ENCODE measurements at regions of chr2 and their contacts with region 1.

Region 1: DNA sequence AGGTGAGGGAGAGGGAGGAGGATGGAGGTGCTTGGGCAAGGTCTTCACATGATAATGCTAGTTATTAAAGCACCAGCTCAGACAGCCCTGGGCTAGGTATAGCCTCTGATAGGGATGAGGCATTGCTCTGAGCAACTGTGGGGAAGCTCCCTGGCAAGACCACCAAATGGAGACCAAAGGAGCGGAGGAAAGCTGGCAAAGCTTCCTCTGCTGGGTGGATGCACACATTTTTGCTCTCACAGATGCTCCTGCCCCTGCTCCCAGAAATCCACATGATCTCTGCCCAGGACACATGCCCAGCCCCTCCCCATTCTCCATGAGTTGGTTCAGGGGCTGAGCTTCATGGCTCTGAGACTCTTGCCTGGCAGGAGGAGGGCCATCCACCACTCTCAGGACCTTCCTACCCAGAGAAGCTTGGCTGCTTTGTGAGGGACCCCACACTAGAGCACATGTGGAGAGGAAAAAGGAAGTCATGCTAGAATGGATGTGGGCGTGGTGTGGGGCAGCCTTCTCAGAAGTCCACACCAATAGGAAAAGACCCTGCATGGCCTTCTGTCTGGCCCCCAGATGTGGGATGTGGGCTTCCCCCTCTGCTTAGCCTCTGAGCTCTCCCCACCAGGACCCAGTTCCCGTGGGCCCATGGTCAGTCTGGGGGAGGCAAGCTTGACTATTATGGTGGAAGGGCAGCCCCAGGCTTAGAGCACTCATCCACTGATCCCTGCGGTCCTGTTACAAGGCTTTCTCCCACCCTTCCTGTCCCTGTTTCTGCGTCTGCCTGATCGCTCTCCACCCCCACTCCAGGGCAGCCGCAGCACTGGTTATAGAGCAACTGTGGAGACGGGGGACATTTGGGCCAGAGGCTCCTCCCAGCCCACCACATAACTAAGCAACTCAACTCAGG is 10.5 kb upstream of the CYP26B1 start:
- DNase-seq: no peak
- ATAC-seq: no peak
- H3K4me3 ChIP-seq: no peak overlapping the region
- H3K27ac ChIP-seq: no peak overlapping the region
- H3K4me1 ChIP-seq: no peaks in the 10 kb centered on the region
- H3K27me3 ChIP-seq: peaks cover 0 to 44% (median 10%) of the 10 kb centered on the region in 9 donors
- CTCF ChIP-seq: no peak
- POLR2A ChIP-seq: no peak

Region 2: GRCh38 chr2:71952572-71953529 is 205.3 kb before region 1 on chr2:
- intact Hi-C with region 1: no loop called
- DNase-seq: no peak
- ATAC-seq: no peak
- H3K4me3 ChIP-seq: no peak overlapping the region
- H3K27ac ChIP-seq: no peak overlapping the region
- H3K4me1 ChIP-seq: peaks cover 0 to 30% (median 0%) of the 10 kb centered on the region in 12 donors
- H3K27me3 ChIP-seq: no peaks in the 10 kb centered on the region
- CTCF ChIP-seq: no peak
- POLR2A ChIP-seq: no peak

Region 3: GRCh38 chr2:72041638-72042111 is 116.4 kb before region 1 on chr2:
- intact Hi-C with region 1: no loop called
- DNase-seq: no peak
- ATAC-seq: peak in 1 of 4 donors; percentile 53
- H3K4me3 ChIP-seq: no peak overlapping the region
- H3K27ac ChIP-seq: no peak overlapping the region
- H3K4me1 ChIP-seq: no peaks in the 10 kb centered on the region
- H3K27me3 ChIP-seq: peaks cover 0 to 2% (median 0%) of the 10 kb centered on the region in 9 donors
- CTCF ChIP-seq: no peak
- POLR2A ChIP-seq: no peak

Region 4: GRCh38 chr2:72083751-72084583 is 74.2 kb before region 1 on chr2:
- intact Hi-C with region 1: loop called in 1 of 10 experiments (anchors 2 kb)
- DNase-seq: no peak
- ATAC-seq: no peak
- H3K4me3 ChIP-seq: no peak overlapping the region
- H3K27ac ChIP-seq: no peak overlapping the region
- H3K4me1 ChIP-seq: no peaks in the 10 kb centered on the region
- H3K27me3 ChIP-seq: no peaks in the 10 kb centered on the region
- CTCF ChIP-seq: no peak
- POLR2A ChIP-seq: no peak

Region 5: DNA sequence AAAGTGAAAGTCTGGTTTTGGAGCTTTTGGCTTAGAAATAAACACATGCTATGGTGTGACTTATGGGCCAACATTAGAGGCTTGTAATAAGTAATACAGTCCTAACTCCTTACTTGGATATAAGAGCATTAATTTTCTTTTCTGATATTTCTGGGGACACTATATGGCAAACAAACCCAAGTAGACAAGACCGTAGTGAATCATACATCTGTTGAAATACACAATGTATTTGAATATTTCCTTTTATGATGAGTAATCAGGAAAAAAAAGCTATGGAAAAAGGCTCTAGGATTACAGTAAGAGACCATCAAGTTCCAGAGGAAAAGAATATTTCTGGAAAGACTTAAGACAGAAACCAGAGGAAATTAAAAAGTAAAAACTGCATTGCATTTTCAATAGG is 135.5 kb after region 1 on chr2:
- intact Hi-C with region 1: no loop called
- DNase-seq: no peak
- ATAC-seq: no peak
- H3K4me3 ChIP-seq: no peak overlapping the region
- H3K27ac ChIP-seq: no peak overlapping the region
- H3K4me1 ChIP-seq: peaks cover 0 to 3% (median 0%) of the 10 kb centered on the region in 12 donors
- H3K27me3 ChIP-seq: no peaks in the 10 kb centered on the region
- CTCF ChIP-seq: no peak
- POLR2A ChIP-seq: no peak

Region 6: DNA sequence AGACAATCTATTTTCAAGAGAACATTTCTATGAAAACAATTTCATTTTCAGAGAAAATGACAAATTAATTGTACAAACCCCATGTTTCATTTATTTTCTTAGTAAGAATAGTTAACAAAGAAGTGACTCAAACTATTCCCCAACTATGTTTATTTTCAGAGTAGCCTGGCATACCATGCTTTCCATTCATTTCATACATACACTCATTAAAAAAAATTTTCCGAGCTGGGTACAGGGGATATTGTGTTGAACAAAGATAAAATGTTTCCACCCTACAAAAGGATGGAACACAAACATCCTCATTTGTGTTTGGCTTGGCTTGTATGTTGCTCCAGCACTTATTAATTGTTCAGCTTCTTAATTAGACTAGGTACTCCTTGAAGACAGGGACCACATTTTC is 336.3 kb after region 1 on chr2:
- intact Hi-C with region 1: no loop called
- DNase-seq: no peak
- ATAC-seq: no peak
- H3K4me3 ChIP-seq: no peak overlapping the region
- H3K27ac ChIP-seq: no peak overlapping the region
- H3K4me1 ChIP-seq: no peaks in the 10 kb centered on the region
- H3K27me3 ChIP-seq: no peaks in the 10 kb centered on the region
- CTCF ChIP-seq: no peak
- POLR2A ChIP-seq: no peak

Measured in heart left ventricle (tissue), 16 donors.